Endothelial cell of umbilical vein (primary cell): ENCODE measurements at regions of chr12 and their contacts with region 1.

Region 1: GRCh38 chr12:4276524-4277204 is 3.1 kb downstream of the CCND2 start:
- DNase-seq: peak; percentile 87
- H3K4me3 ChIP-seq: no peak overlapping the region
- H3K27ac ChIP-seq: no peak overlapping the region
- H3K4me1 ChIP-seq: peaks cover 10% of the 10 kb centered on the region
- H3K27me3 ChIP-seq: peaks cover 49% of the 10 kb centered on the region in 2 experiments
- CTCF ChIP-seq: peak; percentile 80 to 85
- POLR2A ChIP-seq: no peak

Region 2: DNA sequence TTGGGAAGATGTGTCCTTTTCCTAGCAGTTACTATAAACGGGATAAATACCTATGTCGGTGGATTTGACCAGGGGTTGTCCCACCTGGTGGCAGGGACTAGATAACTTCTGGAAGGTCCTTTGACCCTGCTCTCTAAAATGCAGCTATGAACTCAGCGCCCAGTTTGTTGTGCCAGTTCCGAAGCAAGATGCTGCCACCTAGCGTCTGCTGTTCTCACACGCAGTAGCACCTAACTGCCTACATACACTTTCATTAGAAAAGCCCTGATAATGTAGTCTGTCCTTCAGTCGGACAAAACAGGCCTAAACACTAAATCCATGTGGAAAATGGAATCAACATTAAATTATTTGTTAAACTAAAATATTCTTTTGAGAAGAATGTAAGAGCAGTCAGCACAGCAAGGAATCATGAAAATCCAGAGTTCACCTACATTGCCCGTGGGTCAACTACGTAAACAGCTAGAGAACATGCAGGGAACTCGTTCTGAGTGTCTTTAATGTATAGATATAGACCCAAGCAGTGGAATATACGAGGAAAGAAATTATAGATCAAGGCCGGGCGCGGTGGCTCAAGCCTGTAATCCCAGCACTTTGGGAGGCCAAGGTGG is 472.7 kb before region 1 on chr12:
- CTCF ChIA-PET with region 1: interaction called, 10 read pairs
- POLR2A ChIA-PET with region 1: no interaction called
- dilution Hi-C with region 1: no loop called
- intact Hi-C with region 1: loop called (anchors 10 kb)
- DNase-seq: peak; percentile 59
- H3K4me3 ChIP-seq: no peak overlapping the region
- H3K27ac ChIP-seq: no peak overlapping the region
- H3K4me1 ChIP-seq: no peaks in the 10 kb centered on the region
- H3K27me3 ChIP-seq: no peaks in the 10 kb centered on the region
- CTCF ChIP-seq: peak; percentile 88 to 90
- POLR2A ChIP-seq: no peak

Region 3: GRCh38 chr12:3885277-3886094 is 391.2 kb before region 1 on chr12:
- CTCF ChIA-PET with region 1: interaction called, 464 read pairs
- POLR2A ChIA-PET with region 1: no interaction called
- dilution Hi-C with region 1: no loop called
- intact Hi-C with region 1: loop called (anchors 1 kb)
- DNase-seq: peak; percentile 57
- H3K4me3 ChIP-seq: peak overlapping the region in 1 of 3 experiments; percentile 50
- H3K27ac ChIP-seq: no peak overlapping the region
- H3K4me1 ChIP-seq: no peaks in the 10 kb centered on the region
- H3K27me3 ChIP-seq: peaks cover 0 to 5% of the 10 kb centered on the region in 2 experiments
- CTCF ChIP-seq: peak; percentile 55 to 61
- POLR2A ChIP-seq: no peak

Region 4: GRCh38 chr12:3998968-3999826 is 277.5 kb before region 1 on chr12:
- CTCF ChIA-PET with region 1: interaction called, 231 read pairs
- POLR2A ChIA-PET with region 1: no interaction called
- dilution Hi-C with region 1: no loop called
- intact Hi-C with region 1: loop called (anchors 1 kb)
- DNase-seq: no peak
- H3K4me3 ChIP-seq: no peak overlapping the region
- H3K27ac ChIP-seq: no peak overlapping the region
- H3K4me1 ChIP-seq: no peaks in the 10 kb centered on the region
- H3K27me3 ChIP-seq: no peaks in the 10 kb centered on the region
- CTCF ChIP-seq: no peak
- POLR2A ChIP-seq: no peak

Region 5: DNA sequence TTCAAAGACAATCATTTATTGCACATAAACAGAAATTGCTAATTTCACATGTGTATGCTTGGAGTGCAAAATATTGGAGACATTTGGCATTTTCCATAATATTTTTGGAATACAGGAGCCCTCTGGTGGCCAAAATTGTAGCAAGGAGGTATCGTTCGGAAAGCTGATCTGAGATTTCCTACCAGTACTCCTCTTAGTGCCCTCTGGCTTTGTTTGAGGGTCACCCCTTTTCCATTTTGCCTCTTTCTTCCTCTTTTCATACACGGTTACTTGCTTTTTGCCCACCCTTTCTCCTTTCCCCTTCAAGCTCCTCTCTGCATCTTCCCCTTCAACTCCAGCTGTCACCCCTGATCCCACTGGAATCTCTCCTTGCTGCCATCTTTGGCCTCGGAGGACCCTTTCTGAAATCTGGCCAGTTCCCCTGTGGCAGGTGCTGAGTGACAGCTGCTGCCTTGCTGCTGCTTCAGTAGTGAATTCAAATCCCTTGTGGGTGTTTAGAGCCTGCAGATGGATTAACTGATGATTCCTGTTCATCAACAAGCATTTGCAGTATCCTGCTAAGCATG is 238.8 kb before region 1 on chr12:
- CTCF ChIA-PET with region 1: interaction called, 104 read pairs
- POLR2A ChIA-PET with region 1: no interaction called
- dilution Hi-C with region 1: no loop called
- intact Hi-C with region 1: loop called (anchors 1 kb)
- DNase-seq: peak; percentile 39
- H3K4me3 ChIP-seq: no peak overlapping the region
- H3K27ac ChIP-seq: no peak overlapping the region
- H3K4me1 ChIP-seq: no peaks in the 10 kb centered on the region
- H3K27me3 ChIP-seq: peaks cover 0 to 5% of the 10 kb centered on the region in 2 experiments
- CTCF ChIP-seq: peak; percentile 39 to 61
- POLR2A ChIP-seq: no peak

Region 6: GRCh38 chr12:4148418-4149056 is 128.1 kb before region 1 on chr12:
- CTCF ChIA-PET with region 1: interaction called, 11 read pairs
- POLR2A ChIA-PET with region 1: no interaction called
- dilution Hi-C with region 1: no loop called
- intact Hi-C with region 1: no loop called
- DNase-seq: no peak
- H3K4me3 ChIP-seq: no peak overlapping the region
- H3K27ac ChIP-seq: no peak overlapping the region
- H3K4me1 ChIP-seq: no peaks in the 10 kb centered on the region
- H3K27me3 ChIP-seq: peaks cover 0 to 1% of the 10 kb centered on the region in 2 experiments
- CTCF ChIP-seq: no peak
- POLR2A ChIP-seq: no peak

Region 7: GRCh38 chr12:4293299-4293965 is 16.8 kb after region 1 on chr12:
- CTCF ChIA-PET with region 1: interaction called, 29 read pairs
- POLR2A ChIA-PET with region 1: no interaction called
- dilution Hi-C with region 1: no loop called
- intact Hi-C with region 1: no loop called
- DNase-seq: no peak
- H3K4me3 ChIP-seq: no peak overlapping the region
- H3K27ac ChIP-seq: no peak overlapping the region
- H3K4me1 ChIP-seq: no peaks in the 10 kb centered on the region
- H3K27me3 ChIP-seq: no peaks in the 10 kb centered on the region
- CTCF ChIP-seq: no peak
- POLR2A ChIP-seq: no peak